CD14-positive monocyte (primary cell): ENCODE measurements at regions of chr12 and their contacts with region 1.

Region 1: GRCh38 chr12:89709157-89709994 is 738 bp upstream of the ATP2B1 start:
- DNase-seq: peak; percentile 96 to 100 (median 100)
- H3K4me3 ChIP-seq: peak overlapping the region; percentile 76 to 100 (median 98)
- H3K4me3 Mint-ChIP-seq: peak overlapping the region; percentile 90 to 94
- H3K27ac ChIP-seq: peak overlapping the region; percentile 98 to 99
- H3K27ac Mint-ChIP-seq: peak overlapping the region; percentile 96 to 99 (median 98)
- H3K4me1 ChIP-seq: peaks cover 21 to 41% of the 10 kb centered on the region in 2 donors
- H3K4me1 Mint-ChIP-seq: peaks cover 34% of the 10 kb centered on the region
- H3K27me3 ChIP-seq: peaks cover 0 to 4% of the 10 kb centered on the region in 2 donors
- H3K27me3 Mint-ChIP-seq: peaks cover 4 to 33% (median 27%) of the 10 kb centered on the region in 3 donors
- CTCF ChIP-seq: no peak

Region 2: GRCh38 chr12:89352492-89353187 is 356.7 kb before region 1 on chr12 and contains the start of gene DUSP6:
- intact Hi-C with region 1: no loop called
- DNase-seq: peak; percentile 96 to 98 (median 97)
- H3K4me3 ChIP-seq: peak within 1 kb of the TSS; percentile 85 to 99 (median 98)
- H3K4me3 Mint-ChIP-seq: peak within 1 kb of the TSS; percentile 99 to 100
- H3K27ac ChIP-seq: peak within 1 kb of the TSS; percentile 89 to 96
- H3K27ac Mint-ChIP-seq: peak within 1 kb of the TSS; percentile 91 to 98 (median 97)
- H3K4me1 ChIP-seq: peaks cover 38 to 55% of the 10 kb centered on the region in 2 donors
- H3K4me1 Mint-ChIP-seq: peaks cover 44% of the 10 kb centered on the region
- H3K27me3 ChIP-seq: no peaks in the 10 kb centered on the region
- H3K27me3 Mint-ChIP-seq: no peaks in the 10 kb centered on the region
- CTCF ChIP-seq: no peak
- polyA plus RNA-seq, gene DUSP6: 195 to 880 (median 653) TPM

Region 3: GRCh38 chr12:89671469-89671868 is 37.9 kb before region 1 on chr12:
- intact Hi-C with region 1: no loop called
- DNase-seq: no peak
- H3K4me3 ChIP-seq: no peak overlapping the region
- H3K4me3 Mint-ChIP-seq: no peak overlapping the region
- H3K27ac ChIP-seq: no peak overlapping the region
- H3K27ac Mint-ChIP-seq: no peak overlapping the region
- H3K4me1 ChIP-seq: no peaks in the 10 kb centered on the region
- H3K4me1 Mint-ChIP-seq: peaks cover 24% of the 10 kb centered on the region
- H3K27me3 ChIP-seq: no peaks in the 10 kb centered on the region
- H3K27me3 Mint-ChIP-seq: peaks cover 0 to 2% (median 1%) of the 10 kb centered on the region in 3 donors
- CTCF ChIP-seq: no peak

Region 4: DNA sequence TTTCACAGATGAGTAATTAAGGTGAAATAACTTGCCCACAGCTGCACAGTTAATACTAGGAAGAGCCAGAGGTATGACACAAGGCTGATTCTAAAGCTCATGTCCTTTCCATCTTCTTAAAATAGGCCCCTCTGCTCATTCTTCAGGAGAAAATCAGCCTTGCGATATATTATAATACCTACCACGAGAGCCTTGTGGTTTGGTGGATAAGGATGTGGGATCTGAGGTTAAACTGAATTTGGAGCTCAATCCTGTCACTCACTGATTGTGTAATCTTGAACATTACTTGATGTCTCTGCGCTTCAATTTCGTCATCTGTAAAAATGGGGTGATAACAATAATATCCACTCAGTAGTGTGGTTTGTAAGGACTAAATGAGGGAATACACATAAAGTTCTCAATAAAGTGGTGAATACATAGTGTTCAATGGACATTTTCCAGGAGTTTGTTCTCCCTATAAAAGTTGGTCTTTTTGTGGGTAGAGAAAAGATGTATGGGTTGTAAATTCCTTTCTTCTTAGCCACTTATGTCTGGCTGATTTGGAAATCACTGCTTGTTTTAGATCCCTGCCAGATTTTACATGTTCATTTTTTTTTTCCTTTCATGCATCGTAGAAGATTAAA is 24.3 kb after region 1 on chr12:
- intact Hi-C with region 1: loop called (anchors 2 kb)
- DNase-seq: peak; percentile 83 to 94 (median 94)
- H3K4me3 ChIP-seq: peak overlapping the region in 1 of 3 experiments; percentile 36
- H3K4me3 Mint-ChIP-seq: no peak overlapping the region
- H3K27ac ChIP-seq: peak overlapping the region in 1 of 2 donors; percentile 36
- H3K27ac Mint-ChIP-seq: peak overlapping the region; percentile 78 to 89 (median 83)
- H3K4me1 ChIP-seq: peaks cover 31 to 38% of the 10 kb centered on the region in 2 donors
- H3K4me1 Mint-ChIP-seq: peaks cover 38% of the 10 kb centered on the region
- H3K27me3 ChIP-seq: no peaks in the 10 kb centered on the region
- H3K27me3 Mint-ChIP-seq: peaks cover 0 to 2% (median 0%) of the 10 kb centered on the region in 3 donors
- CTCF ChIP-seq: no peak

Region 5: GRCh38 chr12:89756585-89757321 is 47.4 kb after region 1 on chr12:
- intact Hi-C with region 1: loop called (anchors 1 to 2 kb)
- DNase-seq: peak; percentile 96 to 100 (median 99)
- H3K4me3 ChIP-seq: peak overlapping the region in 1 of 3 experiments; percentile 28
- H3K4me3 Mint-ChIP-seq: peak overlapping the region in 1 of 2 donors; percentile 75
- H3K27ac ChIP-seq: peak overlapping the region; percentile 92 to 99
- H3K27ac Mint-ChIP-seq: peak overlapping the region; percentile 99 to 100 (median 100)
- H3K4me1 ChIP-seq: peaks cover 33 to 46% of the 10 kb centered on the region in 2 donors
- H3K4me1 Mint-ChIP-seq: peaks cover 38% of the 10 kb centered on the region
- H3K27me3 ChIP-seq: no peaks in the 10 kb centered on the region
- H3K27me3 Mint-ChIP-seq: peaks cover 2 to 5% (median 2%) of the 10 kb centered on the region in 3 donors
- CTCF ChIP-seq: no peak

Region 6: DNA sequence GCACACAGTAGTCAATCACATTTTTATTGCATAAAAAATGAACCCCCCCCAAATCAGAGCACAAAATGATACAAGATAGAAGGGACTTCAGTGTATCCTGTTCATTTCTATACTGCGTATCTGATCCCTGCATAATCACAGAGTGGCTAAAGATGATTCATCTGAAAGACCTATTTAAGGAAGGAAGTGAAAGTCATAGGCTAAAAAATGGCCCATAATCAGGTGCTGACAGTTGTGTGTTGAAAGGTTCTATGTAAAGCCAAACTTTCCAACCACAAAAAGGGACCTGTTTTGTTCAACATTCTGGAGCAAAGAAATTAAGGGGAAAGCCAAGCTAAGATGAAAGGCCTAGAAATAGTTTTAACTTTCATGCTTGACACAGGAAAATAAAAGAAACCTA is 147.1 kb after region 1 on chr12:
- intact Hi-C with region 1: loop called (anchors 5 kb)
- DNase-seq: peak; percentile 80 to 93 (median 93)
- H3K4me3 ChIP-seq: peak overlapping the region in 1 of 3 experiments; percentile 37
- H3K4me3 Mint-ChIP-seq: peak overlapping the region in 1 of 2 donors; percentile 46
- H3K27ac ChIP-seq: peak overlapping the region in 1 of 2 donors; percentile 80
- H3K27ac Mint-ChIP-seq: peak overlapping the region; percentile 86 to 94 (median 90)
- H3K4me1 ChIP-seq: peaks cover 48 to 59% of the 10 kb centered on the region in 2 donors
- H3K4me1 Mint-ChIP-seq: peaks cover 61% of the 10 kb centered on the region
- H3K27me3 ChIP-seq: no peaks in the 10 kb centered on the region
- H3K27me3 Mint-ChIP-seq: peaks cover 0 to 3% (median 2%) of the 10 kb centered on the region in 3 donors
- CTCF ChIP-seq: no peak

Region 7: DNA sequence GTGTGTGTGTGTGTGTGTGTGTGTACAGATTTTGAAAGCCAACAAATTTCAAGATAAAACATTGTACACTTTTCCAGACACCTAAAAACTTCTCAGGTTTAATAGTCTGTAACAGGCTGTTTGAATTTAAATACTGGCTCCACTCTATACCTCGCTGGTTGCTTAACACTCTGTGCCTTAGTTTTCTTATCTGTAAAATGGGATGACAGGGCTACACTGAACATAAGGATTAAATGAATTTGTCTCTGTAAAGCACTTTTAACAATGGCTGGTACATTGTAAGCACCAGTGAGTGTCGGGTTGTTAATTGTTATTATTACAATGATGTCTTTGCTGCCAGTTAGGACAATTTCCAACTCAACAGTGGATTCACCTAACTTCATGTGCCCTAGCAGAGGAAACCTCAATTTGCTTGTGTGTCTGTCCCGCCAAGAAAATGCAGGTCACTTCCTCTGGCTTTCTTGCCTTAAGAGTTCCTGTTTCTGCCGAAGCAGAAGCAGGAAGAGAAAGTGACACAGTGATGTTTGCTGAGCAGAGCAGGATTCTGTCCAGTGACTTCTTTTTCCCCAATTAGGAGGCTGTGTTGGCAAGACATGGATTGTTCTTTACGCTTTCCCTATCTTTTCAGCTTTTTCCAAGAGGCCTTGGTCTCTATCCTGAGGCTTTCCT is 153.3 kb after region 1 on chr12:
- intact Hi-C with region 1: loop called (anchors 5 kb)
- DNase-seq: peak; percentile 89 to 95 (median 91)
- H3K4me3 ChIP-seq: peak overlapping the region in 1 of 3 experiments; percentile 54
- H3K4me3 Mint-ChIP-seq: peak overlapping the region in 1 of 2 donors; percentile 68
- H3K27ac ChIP-seq: peak overlapping the region; percentile 74 to 98
- H3K27ac Mint-ChIP-seq: peak overlapping the region; percentile 97 to 100 (median 99)
- H3K4me1 ChIP-seq: peaks cover 69 to 73% of the 10 kb centered on the region in 2 donors
- H3K4me1 Mint-ChIP-seq: peaks cover 69% of the 10 kb centered on the region
- H3K27me3 ChIP-seq: no peaks in the 10 kb centered on the region
- H3K27me3 Mint-ChIP-seq: peaks cover 0 to 2% (median 0%) of the 10 kb centered on the region in 3 donors
- CTCF ChIP-seq: no peak